Activated CD4-positive, alpha-beta memory T cell treated with anti-CD3 and anti-CD28 coated beads, Interleukin-2, amount 10 ng/mL, durations not matched to agents 7 days and 5 days (primary cell): ENCODE measurements at regions of chr9 and their contacts with region 1.

Region 1: DNA sequence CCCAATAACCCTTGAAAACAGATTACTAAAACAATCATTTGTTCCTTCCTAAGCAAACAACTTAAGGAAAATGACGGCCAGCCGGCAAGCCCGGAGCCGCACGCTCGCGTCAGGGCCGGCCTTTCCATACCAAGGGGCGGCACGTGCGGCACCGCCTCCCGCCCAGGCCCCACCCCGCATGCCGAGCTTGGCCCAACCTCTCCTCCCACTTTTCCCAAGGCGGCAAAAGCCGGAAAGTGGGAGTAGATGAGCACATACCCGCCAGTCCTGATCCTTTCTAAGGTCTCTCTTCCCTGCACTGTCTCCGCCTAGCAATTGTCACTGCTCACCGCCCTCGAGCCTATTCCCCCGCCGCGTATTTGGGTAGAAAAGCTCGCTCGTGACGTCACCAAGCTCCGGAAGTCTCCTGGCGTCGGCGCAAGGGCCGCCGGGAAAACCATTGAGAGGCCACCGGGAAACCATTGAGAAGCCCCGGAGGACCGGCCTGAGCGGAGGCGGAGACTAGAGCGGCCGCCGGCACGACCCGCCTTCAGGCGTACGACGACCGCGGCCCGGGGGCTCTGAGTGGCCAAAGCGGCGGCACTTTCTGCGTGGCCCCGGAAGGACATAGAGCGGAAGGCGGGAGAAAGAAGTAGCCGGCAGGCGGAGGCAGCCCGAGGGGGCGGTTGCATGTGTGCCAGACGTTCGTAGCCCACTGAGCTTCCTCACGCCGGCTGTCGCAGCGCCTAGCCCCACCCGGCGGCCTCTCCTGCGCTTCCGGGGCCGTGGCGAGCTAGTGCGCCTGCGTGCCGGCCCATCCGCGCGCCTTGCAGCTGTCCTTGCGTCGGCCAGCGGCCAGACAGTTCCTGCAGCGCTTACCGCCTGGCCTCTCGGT is at the starts of genes NCBP1 and TSTD2:
- DNase-seq: peak; percentile 97
- H3K4me3 Mint-ChIP-seq: peak within 1 kb of the TSS; percentile 86
- H3K27ac Mint-ChIP-seq: peak within 1 kb of the TSS; percentile 97
- H3K4me1 Mint-ChIP-seq: peaks cover 49% of the 10 kb centered on the region
- H3K27me3 Mint-ChIP-seq: no peaks in the 10 kb centered on the region
- total RNA-seq, gene NCBP1: 34.5 to 36.5 TPM
- total RNA-seq, gene TSTD2: 10.5 to 12.2 TPM

Region 2: DNA sequence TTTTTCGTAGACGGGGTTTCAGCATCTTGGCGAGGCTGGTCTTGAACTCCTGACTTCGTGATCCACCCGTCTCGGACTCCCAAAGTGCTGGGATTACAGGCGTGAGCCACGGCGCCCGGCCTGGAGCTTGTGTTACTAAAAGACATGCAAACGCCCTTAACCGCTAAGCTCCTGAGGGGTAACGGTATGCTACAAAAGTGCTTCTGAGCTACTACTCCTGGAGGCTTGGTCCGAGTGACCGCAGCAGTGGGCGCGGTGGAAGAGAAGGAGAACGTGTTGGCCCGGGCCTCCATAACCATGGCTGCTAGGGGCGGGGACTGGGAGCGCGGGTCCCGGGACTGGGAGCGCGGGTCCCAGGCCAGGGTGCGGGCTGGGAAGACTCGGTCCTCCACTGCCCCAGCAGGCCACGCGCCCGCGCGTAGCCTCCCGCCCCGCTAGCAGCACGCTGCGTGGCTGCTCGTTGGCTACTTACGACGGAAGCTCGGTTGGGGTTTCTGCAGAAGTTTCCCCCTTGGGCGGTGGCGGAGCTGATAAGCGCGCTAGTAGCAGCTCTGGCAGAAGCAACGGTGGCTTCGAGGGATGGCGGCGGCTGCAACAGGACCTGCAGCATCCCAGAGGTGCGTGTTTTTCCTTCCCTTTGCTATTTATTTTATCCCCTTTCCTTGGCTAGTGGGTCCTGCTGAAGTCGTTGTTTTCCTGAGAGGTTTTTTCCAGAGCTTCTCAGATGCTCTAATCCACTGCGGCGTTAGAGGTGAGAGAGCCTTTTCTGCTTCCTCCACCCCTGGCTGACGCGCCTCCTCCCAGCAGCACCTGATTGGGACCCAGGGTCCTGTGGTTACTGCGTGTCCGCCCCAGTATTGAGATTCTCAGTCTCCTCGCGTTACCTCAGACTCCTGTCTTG is 395.0 kb before region 1 on chr9:
- CTCF ChIA-PET with region 1: interaction called, 5 read pairs
- POLR2A ChIA-PET with region 1: interaction called, 13 read pairs
- DNase-seq: peak; percentile 87
- H3K4me3 Mint-ChIP-seq: peak overlapping the region; percentile 91
- H3K27ac Mint-ChIP-seq: peak overlapping the region; percentile 93
- H3K4me1 Mint-ChIP-seq: peaks cover 19% of the 10 kb centered on the region
- H3K27me3 Mint-ChIP-seq: no peaks in the 10 kb centered on the region

Region 3: DNA sequence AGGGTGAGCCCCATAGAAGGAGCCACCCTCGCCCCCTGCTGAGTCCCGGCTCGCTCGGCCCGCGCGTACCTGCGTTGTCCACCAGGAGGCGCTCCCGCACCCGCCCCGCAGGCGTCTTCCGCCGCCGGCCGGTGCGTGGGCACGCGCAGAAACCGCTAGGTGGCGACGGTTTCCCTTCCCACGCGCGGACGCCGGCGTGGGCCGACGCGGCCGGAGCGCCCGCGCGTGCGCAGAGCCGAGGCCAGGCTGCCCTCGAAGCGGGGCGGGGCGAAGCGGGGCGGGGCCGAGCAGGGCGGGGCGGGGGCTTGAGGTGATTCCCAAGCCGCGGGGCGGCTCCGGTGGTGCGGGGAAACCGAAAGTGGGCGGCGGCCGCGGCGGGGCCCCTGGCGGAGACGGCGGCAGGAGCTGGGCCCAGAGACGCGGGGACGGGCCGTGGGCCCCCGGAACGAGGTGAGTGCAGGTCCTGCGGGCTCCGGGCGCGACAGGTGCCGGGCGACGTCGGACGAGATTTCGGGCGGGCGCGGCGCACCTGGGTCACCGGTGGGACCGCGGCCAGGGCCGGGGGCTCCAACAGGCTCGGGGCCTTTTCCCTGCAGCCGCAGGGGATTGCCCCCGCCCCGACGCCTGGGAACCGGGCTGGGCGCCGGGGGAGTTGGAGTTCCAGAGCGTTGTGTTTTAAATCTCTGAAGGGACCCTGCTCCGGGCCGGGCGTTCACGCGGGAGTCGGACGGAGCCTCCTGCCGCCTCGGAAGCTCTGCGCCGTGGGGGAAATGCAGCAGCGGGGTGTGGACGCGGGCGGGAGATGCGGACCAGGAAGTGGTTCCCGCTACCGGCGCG is 221.2 kb before region 1 on chr9 and contains the start of gene TDRD7:
- CTCF ChIA-PET with region 1: interaction called, 4 read pairs
- POLR2A ChIA-PET with region 1: interaction called, 14 read pairs
- DNase-seq: peak; percentile 91
- H3K4me3 Mint-ChIP-seq: peak within 1 kb of the TSS; percentile 84
- H3K27ac Mint-ChIP-seq: peak within 1 kb of the TSS; percentile 68
- H3K4me1 Mint-ChIP-seq: peaks cover 28% of the 10 kb centered on the region
- H3K27me3 Mint-ChIP-seq: peaks cover 33% of the 10 kb centered on the region
- total RNA-seq, gene TDRD7: 19.4 to 19.8 TPM

Region 4: DNA sequence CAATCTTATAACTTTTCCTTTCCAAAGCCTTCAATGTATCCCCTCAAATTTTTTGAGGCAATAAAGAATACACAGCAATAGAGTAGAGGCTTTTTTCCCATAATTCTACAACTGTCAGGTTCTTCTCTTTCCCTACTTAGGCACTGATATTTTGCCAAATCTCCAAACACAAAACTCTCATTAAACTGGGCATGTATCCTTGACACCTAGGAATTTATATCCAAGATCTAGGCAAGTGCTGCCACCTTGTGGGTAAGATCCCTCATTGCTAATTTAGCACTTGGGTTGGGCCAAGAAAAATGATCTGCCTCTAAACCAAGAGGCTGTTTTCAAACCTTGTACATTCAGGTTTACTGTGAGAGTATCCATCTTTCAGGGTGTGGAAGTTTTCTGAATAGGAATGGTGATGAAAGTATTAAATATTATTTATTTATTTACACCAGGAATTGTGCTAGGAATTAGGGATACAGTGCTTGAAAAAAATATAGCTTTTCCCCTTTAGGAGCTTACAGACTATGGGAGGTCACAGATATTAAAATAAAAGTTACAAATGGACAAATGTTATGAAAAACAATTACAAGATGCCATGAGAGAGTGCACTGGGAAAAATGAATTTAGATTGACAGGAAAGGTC is 17.7 kb before region 1 on chr9:
- CTCF ChIA-PET with region 1: interaction called, 33 read pairs
- POLR2A ChIA-PET with region 1: interaction called, 7 read pairs
- DNase-seq: peak; percentile 61
- H3K4me3 Mint-ChIP-seq: no peak overlapping the region
- H3K27ac Mint-ChIP-seq: no peak overlapping the region
- H3K4me1 Mint-ChIP-seq: peaks cover 18% of the 10 kb centered on the region
- H3K27me3 Mint-ChIP-seq: no peaks in the 10 kb centered on the region

Region 5: GRCh38 chr9:97645720-97646119 is 12.5 kb after region 1 on chr9:
- CTCF ChIA-PET with region 1: interaction called, 5 read pairs
- POLR2A ChIA-PET with region 1: interaction called, 45 read pairs
- DNase-seq: no peak
- H3K4me3 Mint-ChIP-seq: no peak overlapping the region
- H3K27ac Mint-ChIP-seq: no peak overlapping the region
- H3K4me1 Mint-ChIP-seq: peaks cover 4% of the 10 kb centered on the region
- H3K27me3 Mint-ChIP-seq: no peaks in the 10 kb centered on the region

Region 6: DNA sequence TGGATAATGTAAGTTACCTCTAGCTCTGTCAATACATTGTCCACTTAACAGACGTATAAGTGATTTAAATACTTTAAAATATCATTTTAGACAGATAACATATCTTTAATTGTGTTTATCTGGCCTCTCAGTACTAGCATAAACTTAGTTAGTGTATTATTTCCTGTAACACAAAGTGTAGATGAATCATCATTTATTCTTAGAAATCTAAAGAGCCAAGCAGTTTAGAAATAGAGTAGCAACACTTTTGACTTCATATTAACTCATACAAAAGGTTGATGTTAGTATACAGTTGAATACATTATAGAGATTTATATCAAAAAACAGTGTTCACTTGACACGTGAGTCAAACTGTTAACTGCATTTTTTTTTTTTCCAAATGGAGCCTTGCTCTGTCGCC is 18.4 kb after region 1 on chr9:
- CTCF ChIA-PET with region 1: interaction called, 3 read pairs
- POLR2A ChIA-PET with region 1: interaction called, 45 read pairs
- DNase-seq: no peak
- H3K4me3 Mint-ChIP-seq: no peak overlapping the region
- H3K27ac Mint-ChIP-seq: peak overlapping the region; percentile 56
- H3K4me1 Mint-ChIP-seq: peaks cover 9% of the 10 kb centered on the region
- H3K27me3 Mint-ChIP-seq: no peaks in the 10 kb centered on the region

Region 7: GRCh38 chr9:97696803-97697601 is 63.8 kb after region 1 on chr9 and contains the start of gene XPA:
- CTCF ChIA-PET with region 1: interaction called, 3 read pairs
- POLR2A ChIA-PET with region 1: interaction called, 32 read pairs
- DNase-seq: peak; percentile 96
- H3K4me3 Mint-ChIP-seq: peak within 1 kb of the TSS; percentile 87
- H3K27ac Mint-ChIP-seq: peak within 1 kb of the TSS; percentile 66
- H3K4me1 Mint-ChIP-seq: peaks cover 43% of the 10 kb centered on the region
- H3K27me3 Mint-ChIP-seq: peaks cover 6% of the 10 kb centered on the region
- total RNA-seq, gene XPA: 12.1 to 12.4 TPM